Naive thymus-derived CD4-positive, alpha-beta T cell (primary cell): ENCODE measurements at regions of chr2 and their contacts with region 1.

Region 1: GRCh38 chr2:216498418-216499413 is at the start of gene RPL37A:
- DNase-seq: peak; percentile 81 to 91 (median 87)
- ATAC-seq: peak; percentile 98
- H3K4me3 ChIP-seq: peak within 1 kb of the TSS; percentile 95
- H3K4me3 Mint-ChIP-seq: peak within 1 kb of the TSS; percentile 94 to 100 (median 98)
- H3K27ac ChIP-seq: peak within 1 kb of the TSS; percentile 89
- H3K27ac Mint-ChIP-seq: peak within 1 kb of the TSS; percentile 92 to 98 (median 93)
- H3K4me1 ChIP-seq: peaks cover 19 to 24% of the 10 kb centered on the region in 2 donors
- H3K4me1 Mint-ChIP-seq: peaks cover 22 to 61% (median 50%) of the 10 kb centered on the region in 7 donors
- H3K27me3 ChIP-seq: no peaks in the 10 kb centered on the region
- H3K27me3 Mint-ChIP-seq: peaks cover 0 to 3% (median 0%) of the 10 kb centered on the region in 5 donors
- total RNA-seq, gene RPL37A: 2,173 to 3,712 (median 3,236) TPM

Region 2: GRCh38 chr2:215311625-215312396 is 1186.9 kb before region 1 on chr2 and contains the start of gene ATIC:
- CTCF ChIA-PET with region 1: no interaction called
- POLR2A ChIA-PET with region 1: no interaction called
- intact Hi-C with region 1: loop called in 1 of 2 experiments (anchors 5 kb)
- DNase-seq: peak; percentile 67 to 92 (median 83)
- ATAC-seq: peak; percentile 98
- H3K4me3 ChIP-seq: peak within 1 kb of the TSS; percentile 98
- H3K4me3 Mint-ChIP-seq: peak within 1 kb of the TSS; percentile 86 to 95 (median 93)
- H3K27ac ChIP-seq: peak within 1 kb of the TSS; percentile 74
- H3K27ac Mint-ChIP-seq: peak within 1 kb of the TSS; percentile 84 to 97 (median 92)
- H3K4me1 ChIP-seq: peaks cover 13 to 16% of the 10 kb centered on the region in 2 donors
- H3K4me1 Mint-ChIP-seq: peaks cover 11 to 42% (median 37%) of the 10 kb centered on the region in 7 donors
- H3K27me3 ChIP-seq: no peaks in the 10 kb centered on the region
- H3K27me3 Mint-ChIP-seq: peaks cover 0 to 2% (median 0%) of the 10 kb centered on the region in 5 donors
- total RNA-seq, gene ATIC: 62.1 to 170 (median 83.2) TPM

Region 3: GRCh38 chr2:216057688-216058193 is 441.0 kb before region 1 on chr2:
- CTCF ChIA-PET with region 1: no interaction called
- POLR2A ChIA-PET with region 1: no interaction called
- intact Hi-C with region 1: loop called in 1 of 2 experiments (anchors 2 kb)
- DNase-seq: peak in 8 of 9 donors; percentile 48 to 76 (median 67)
- ATAC-seq: peak; percentile 96
- H3K4me3 ChIP-seq: peak overlapping the region; percentile 49
- H3K4me3 Mint-ChIP-seq: peak overlapping the region; percentile 63 to 87 (median 84)
- H3K27ac ChIP-seq: peak overlapping the region; percentile 83
- H3K27ac Mint-ChIP-seq: peak overlapping the region; percentile 94 to 100 (median 98)
- H3K4me1 ChIP-seq: peaks cover 16 to 22% of the 10 kb centered on the region in 2 donors
- H3K4me1 Mint-ChIP-seq: peaks cover 8 to 42% (median 37%) of the 10 kb centered on the region in 7 donors
- H3K27me3 ChIP-seq: no peaks in the 10 kb centered on the region
- H3K27me3 Mint-ChIP-seq: no peaks in the 10 kb centered on the region

Region 4: DNA sequence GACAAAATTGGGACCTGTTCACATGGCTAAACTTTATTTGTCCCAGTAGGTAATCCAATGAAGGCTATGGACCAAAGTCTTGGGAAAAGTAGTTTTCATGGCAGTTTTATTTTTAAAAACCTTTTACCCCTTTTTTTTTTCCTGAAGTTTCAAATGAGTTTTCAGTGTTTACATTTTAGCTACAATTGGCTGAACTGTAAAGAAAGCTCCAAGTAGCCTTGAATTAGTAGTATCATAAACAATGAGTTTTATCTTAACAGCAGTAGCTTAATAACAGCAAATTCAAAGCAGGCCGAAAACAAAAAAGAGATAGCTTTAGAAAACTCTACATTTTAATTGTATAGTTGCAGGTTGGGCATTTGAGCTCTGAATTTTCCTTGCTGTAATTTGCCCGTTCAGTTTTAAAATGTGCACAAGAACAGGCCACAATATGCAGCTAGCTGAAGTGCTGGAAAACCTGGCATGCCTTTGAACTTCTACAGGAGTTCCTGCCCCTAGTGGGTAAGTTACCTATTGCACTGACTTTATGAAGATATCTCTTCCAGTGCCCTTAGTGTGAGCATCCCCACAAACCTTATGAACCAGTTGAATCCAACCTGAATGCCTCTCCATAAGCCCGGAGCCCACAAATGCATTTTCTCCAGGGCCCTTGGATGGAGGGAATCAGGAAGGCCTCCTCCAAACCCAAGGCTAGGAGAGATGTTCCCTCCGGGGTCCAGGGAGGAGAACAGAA is 282.9 kb before region 1 on chr2:
- CTCF ChIA-PET with region 1: no interaction called
- POLR2A ChIA-PET with region 1: no interaction called
- intact Hi-C with region 1: loop called in 1 of 2 experiments (anchors 5 kb)
- DNase-seq: no peak
- ATAC-seq: no peak
- H3K4me3 ChIP-seq: no peak overlapping the region
- H3K4me3 Mint-ChIP-seq: no peak overlapping the region
- H3K27ac ChIP-seq: no peak overlapping the region
- H3K27ac Mint-ChIP-seq: no peak overlapping the region
- H3K4me1 ChIP-seq: peaks cover 0 to 9% of the 10 kb centered on the region in 2 donors
- H3K4me1 Mint-ChIP-seq: peaks cover 11 to 39% (median 34%) of the 10 kb centered on the region in 7 donors
- H3K27me3 ChIP-seq: no peaks in the 10 kb centered on the region
- H3K27me3 Mint-ChIP-seq: no peaks in the 10 kb centered on the region

Region 5: GRCh38 chr2:216350214-216350789 is 148.4 kb before region 1 on chr2:
- CTCF ChIA-PET with region 1: no interaction called
- POLR2A ChIA-PET with region 1: interaction called, 6 read pairs
- intact Hi-C with region 1: loop called in 1 of 2 experiments (anchors 2 kb)
- DNase-seq: no peak
- ATAC-seq: peak; percentile 63
- H3K4me3 ChIP-seq: no peak overlapping the region
- H3K4me3 Mint-ChIP-seq: peak overlapping the region in 9 of 10 donors; percentile 14 to 55 (median 38)
- H3K27ac ChIP-seq: no peak overlapping the region
- H3K27ac Mint-ChIP-seq: peak overlapping the region; percentile 22 to 90 (median 76)
- H3K4me1 ChIP-seq: peaks cover 71 to 72% of the 10 kb centered on the region in 2 donors
- H3K4me1 Mint-ChIP-seq: peaks cover 67 to 93% (median 85%) of the 10 kb centered on the region in 7 donors
- H3K27me3 ChIP-seq: no peaks in the 10 kb centered on the region
- H3K27me3 Mint-ChIP-seq: no peaks in the 10 kb centered on the region

Region 6: GRCh38 chr2:216474925-216475670 is 23.6 kb before region 1 on chr2:
- CTCF ChIA-PET with region 1: no interaction called
- POLR2A ChIA-PET with region 1: interaction called, 3 read pairs
- intact Hi-C with region 1: loop called in 1 of 2 experiments (anchors 1 kb)
- DNase-seq: peak in 7 of 9 donors; percentile 3 to 35 (median 32)
- ATAC-seq: peak; percentile 78
- H3K4me3 ChIP-seq: no peak overlapping the region
- H3K4me3 Mint-ChIP-seq: peak overlapping the region; percentile 47 to 83 (median 65)
- H3K27ac ChIP-seq: no peak overlapping the region
- H3K27ac Mint-ChIP-seq: peak overlapping the region in 6 of 9 donors; percentile 6 to 81 (median 54)
- H3K4me1 ChIP-seq: peaks cover 0 to 13% of the 10 kb centered on the region in 2 donors
- H3K4me1 Mint-ChIP-seq: peaks cover 13 to 22% (median 15%) of the 10 kb centered on the region in 7 donors
- H3K27me3 ChIP-seq: no peaks in the 10 kb centered on the region
- H3K27me3 Mint-ChIP-seq: no peaks in the 10 kb centered on the region

Region 7: GRCh38 chr2:216551234-216551633 is 52.5 kb after region 1 on chr2:
- CTCF ChIA-PET with region 1: no interaction called
- POLR2A ChIA-PET with region 1: no interaction called
- intact Hi-C with region 1: no loop called
- DNase-seq: no peak
- ATAC-seq: no peak
- H3K4me3 ChIP-seq: no peak overlapping the region
- H3K4me3 Mint-ChIP-seq: no peak overlapping the region
- H3K27ac ChIP-seq: no peak overlapping the region
- H3K27ac Mint-ChIP-seq: no peak overlapping the region
- H3K4me1 ChIP-seq: peaks cover 0 to 12% of the 10 kb centered on the region in 2 donors
- H3K4me1 Mint-ChIP-seq: peaks cover 0 to 8% (median 0%) of the 10 kb centered on the region in 7 donors
- H3K27me3 ChIP-seq: no peaks in the 10 kb centered on the region
- H3K27me3 Mint-ChIP-seq: peaks cover 0 to 2% (median 0%) of the 10 kb centered on the region in 5 donors

Region 8: DNA sequence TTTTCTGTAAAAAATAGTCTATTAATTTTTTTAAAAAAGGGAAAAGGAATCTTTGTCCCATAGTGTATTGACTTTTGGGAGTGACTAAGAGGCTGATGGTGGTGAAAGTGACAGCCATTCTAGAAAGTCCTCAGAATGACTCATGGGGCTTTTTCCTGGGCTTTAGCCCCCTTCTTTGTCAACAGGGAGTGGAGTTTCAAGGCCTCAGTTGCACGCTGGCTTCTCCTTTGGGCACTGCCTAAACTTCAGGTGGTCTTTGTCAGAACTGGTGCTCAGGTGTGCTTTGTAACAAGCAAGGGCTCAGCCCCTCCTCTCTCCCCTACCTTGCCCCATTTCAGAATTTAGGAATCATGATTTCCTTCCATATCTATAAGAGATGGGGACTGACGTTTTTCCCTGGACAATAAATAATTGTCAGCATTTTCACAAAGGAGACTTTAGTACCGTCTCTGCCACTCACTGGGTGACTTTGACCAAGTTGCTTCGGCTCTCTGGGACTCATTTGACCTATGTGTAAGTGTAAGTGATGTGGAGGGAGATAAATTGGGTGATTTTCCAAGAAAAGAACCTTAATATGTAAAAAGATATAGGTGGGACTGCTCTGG is 73.3 kb after region 1 on chr2:
- CTCF ChIA-PET with region 1: no interaction called
- POLR2A ChIA-PET with region 1: no interaction called
- intact Hi-C with region 1: no loop called
- DNase-seq: no peak
- ATAC-seq: no peak
- H3K4me3 ChIP-seq: no peak overlapping the region
- H3K4me3 Mint-ChIP-seq: no peak overlapping the region
- H3K27ac ChIP-seq: no peak overlapping the region
- H3K27ac Mint-ChIP-seq: no peak overlapping the region
- H3K4me1 ChIP-seq: no peaks in the 10 kb centered on the region
- H3K4me1 Mint-ChIP-seq: peaks cover 0 to 10% (median 8%) of the 10 kb centered on the region in 7 donors
- H3K27me3 ChIP-seq: no peaks in the 10 kb centered on the region
- H3K27me3 Mint-ChIP-seq: peaks cover 0 to 9% (median 8%) of the 10 kb centered on the region in 5 donors

Region 9: GRCh38 chr2:216606551-216607276 is 108.0 kb after region 1 on chr2:
- CTCF ChIA-PET with region 1: no interaction called
- POLR2A ChIA-PET with region 1: no interaction called
- intact Hi-C with region 1: loop called in 1 of 2 experiments (anchors 5 kb)
- DNase-seq: peak; percentile 5 to 74 (median 28)
- ATAC-seq: peak; percentile 76
- H3K4me3 ChIP-seq: peak overlapping the region; percentile 45
- H3K4me3 Mint-ChIP-seq: peak overlapping the region; percentile 59 to 87 (median 80)
- H3K27ac ChIP-seq: no peak overlapping the region
- H3K27ac Mint-ChIP-seq: peak overlapping the region in 8 of 9 donors; percentile 12 to 94 (median 70)
- H3K4me1 ChIP-seq: peaks cover 2% of the 10 kb centered on the region in 2 donors
- H3K4me1 Mint-ChIP-seq: peaks cover 8 to 47% (median 13%) of the 10 kb centered on the region in 7 donors
- H3K27me3 ChIP-seq: no peaks in the 10 kb centered on the region
- H3K27me3 Mint-ChIP-seq: peaks cover 0 to 16% (median 10%) of the 10 kb centered on the region in 5 donors

Region 10: GRCh38 chr2:217434181-217434975 is 935.7 kb after region 1 on chr2:
- CTCF ChIA-PET with region 1: no interaction called
- POLR2A ChIA-PET with region 1: no interaction called
- intact Hi-C with region 1: no loop called
- DNase-seq: peak in 5 of 9 donors; percentile 2 to 23 (median 5)
- ATAC-seq: peak; percentile 86
- H3K4me3 ChIP-seq: no peak overlapping the region
- H3K4me3 Mint-ChIP-seq: peak overlapping the region in 6 of 10 donors; percentile 11 to 57 (median 37)
- H3K27ac ChIP-seq: no peak overlapping the region
- H3K27ac Mint-ChIP-seq: peak overlapping the region in 5 of 9 donors; percentile 4 to 63 (median 31)
- H3K4me1 ChIP-seq: no peaks in the 10 kb centered on the region
- H3K4me1 Mint-ChIP-seq: peaks cover 2 to 20% (median 15%) of the 10 kb centered on the region in 7 donors
- H3K27me3 ChIP-seq: no peaks in the 10 kb centered on the region
- H3K27me3 Mint-ChIP-seq: peaks cover 0 to 10% (median 4%) of the 10 kb centered on the region in 5 donors